Posterior cingulate gyrus (tissue), 11 donors: ENCODE measurements at regions of chr11 and their contacts with region 1.

Region 1: DNA sequence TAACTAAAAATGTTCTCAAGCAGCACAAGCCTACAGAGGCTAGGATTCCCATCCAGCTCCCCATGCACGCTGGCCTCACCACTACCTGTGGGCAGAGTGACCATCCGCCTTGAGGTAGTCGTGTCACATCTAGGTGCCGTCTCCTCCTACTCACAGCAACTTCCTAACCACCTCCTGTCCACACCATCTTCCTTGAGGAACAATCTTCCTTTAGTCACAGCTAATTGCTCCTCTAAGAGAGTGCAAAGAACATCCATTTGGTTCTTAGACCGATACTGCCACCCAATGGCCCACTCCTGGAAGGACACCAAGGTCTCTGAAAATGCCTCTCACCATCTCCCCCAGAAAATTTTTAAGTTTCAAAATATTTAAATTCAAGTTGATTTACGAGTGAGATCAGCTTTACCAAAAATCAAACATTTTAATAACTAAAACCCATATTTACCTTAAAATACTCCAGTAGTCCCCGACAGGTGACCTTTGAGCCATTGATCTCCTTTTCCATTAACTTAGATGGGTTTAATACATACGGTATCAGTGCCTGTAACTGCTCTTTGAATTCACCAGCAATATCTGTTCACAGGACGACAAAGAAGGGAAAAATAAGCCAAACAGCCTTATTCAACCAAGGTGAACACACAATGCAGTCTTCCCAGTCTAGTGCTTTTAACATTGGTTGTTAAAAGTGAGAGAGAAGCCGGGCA is 21.7 kb upstream of the PLAAT3 start:
- DNase-seq: peak; percentile 40 to 95 (median 76)

Region 2: GRCh38 chr11:63042596-63042995 is 593.3 kb before region 1 on chr11:
- intact Hi-C with region 1: loop called (anchors 5 kb)
- DNase-seq: no peak

Region 3: DNA sequence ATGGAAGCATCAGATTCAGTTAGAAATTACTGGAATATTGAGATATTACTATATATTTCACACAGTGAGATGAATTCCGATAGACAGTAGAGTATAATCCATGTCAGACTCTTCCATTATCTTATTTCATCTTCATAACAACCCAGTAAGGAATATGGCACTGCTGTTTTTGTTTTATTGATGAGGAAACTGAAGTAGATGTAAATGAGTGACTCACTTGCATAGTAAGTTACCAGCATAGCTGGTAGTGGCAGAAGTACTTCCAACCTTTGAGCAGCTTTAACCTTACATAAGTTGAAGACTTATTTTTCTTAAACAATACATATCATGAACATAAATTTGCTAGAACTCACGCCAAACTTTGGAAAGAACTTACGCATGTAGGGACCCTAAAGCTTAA is 337.7 kb before region 1 on chr11:
- intact Hi-C with region 1: no loop called
- DNase-seq: no peak

Region 4: GRCh38 chr11:63478896-63479295 is 157.0 kb before region 1 on chr11:
- intact Hi-C with region 1: loop called (anchors 1 kb)
- DNase-seq: peak in 6 of 10 donors; percentile 8 to 84 (median 59)

Region 5: DNA sequence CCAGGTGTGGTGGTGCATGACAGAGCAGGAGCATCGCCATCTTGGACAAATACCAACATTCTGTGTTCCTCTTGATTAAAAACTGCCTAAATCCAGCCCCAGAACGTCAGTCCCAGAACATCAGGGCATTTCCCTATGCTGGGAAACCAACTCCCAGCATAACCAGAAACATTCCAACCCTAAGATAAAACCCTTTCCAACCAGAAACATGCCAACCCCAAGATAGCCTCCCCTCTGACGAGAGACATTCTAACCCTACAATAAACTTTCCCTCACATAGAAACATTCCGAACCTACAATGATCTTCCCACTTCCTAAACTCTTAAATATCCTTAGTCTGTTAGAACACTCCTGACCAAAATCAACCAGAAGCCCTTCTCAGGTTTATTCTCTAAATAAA is 87.7 kb before region 1 on chr11:
- intact Hi-C with region 1: no loop called
- DNase-seq: no peak

Region 6: DNA sequence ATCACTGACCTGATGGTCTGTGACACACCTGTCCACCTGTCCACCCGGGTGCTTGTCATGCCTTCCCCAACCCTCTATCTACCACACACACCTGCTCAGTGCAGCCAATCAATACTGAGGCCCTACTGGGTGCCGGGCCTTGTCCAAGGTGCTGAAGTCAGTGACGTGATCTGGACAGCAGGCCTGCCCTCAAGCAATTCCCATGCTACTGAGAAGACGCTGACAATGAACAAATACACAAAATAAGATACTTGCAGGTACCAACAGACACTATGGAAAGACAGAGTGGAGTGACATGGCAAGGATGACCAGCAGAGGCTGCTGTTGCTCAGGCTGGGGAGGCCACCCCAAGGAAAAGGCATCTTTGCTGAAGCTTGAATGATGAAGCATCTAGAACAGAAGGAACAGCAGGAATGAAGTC is 42.9 kb before region 1 on chr11:
- intact Hi-C with region 1: loop called (anchors 1 kb)
- DNase-seq: peak in 7 of 10 donors; percentile 36 to 92 (median 56)

Region 7: DNA sequence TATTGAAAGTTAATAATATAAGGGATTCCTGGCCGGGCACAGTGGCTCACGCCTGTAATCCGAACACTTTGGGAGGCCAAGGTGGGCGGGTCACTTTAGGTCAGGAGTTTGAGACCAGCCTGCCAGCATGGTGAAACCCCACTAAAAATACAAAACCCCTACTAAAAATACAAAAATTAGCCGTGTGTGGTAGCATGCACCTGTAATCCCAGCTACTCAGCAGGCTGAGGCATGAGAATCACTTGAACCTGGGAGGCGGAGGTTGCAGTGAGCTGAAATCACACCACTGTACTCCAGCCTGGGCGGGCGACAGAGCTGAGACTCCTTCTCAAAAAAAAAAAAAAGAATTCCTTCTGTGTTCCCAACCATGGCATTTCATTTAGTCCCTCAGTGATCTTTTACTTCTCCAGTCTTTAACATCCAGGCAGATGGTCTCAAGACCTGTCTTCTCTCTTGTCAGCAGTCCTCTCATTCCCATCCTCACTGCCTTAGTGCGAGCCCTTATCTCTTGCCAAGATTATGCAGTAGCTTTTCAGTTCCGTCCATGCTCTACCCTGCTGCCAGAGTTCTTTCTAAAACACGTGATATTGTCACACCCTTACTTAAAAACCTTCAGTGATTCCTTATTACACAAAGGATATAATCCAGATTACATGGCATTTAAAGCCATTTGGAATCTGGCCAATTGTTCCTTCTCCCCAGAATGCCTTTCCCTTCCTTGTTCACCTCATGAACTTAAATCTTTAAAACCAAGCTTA is 63.2 kb after region 1 on chr11:
- intact Hi-C with region 1: no loop called
- DNase-seq: no peak

Region 8: GRCh38 chr11:63738720-63739360 is 102.9 kb after region 1 on chr11:
- intact Hi-C with region 1: loop called (anchors 2 kb)
- DNase-seq: peak in 8 of 10 donors; percentile 23 to 88 (median 78)

Region 9: DNA sequence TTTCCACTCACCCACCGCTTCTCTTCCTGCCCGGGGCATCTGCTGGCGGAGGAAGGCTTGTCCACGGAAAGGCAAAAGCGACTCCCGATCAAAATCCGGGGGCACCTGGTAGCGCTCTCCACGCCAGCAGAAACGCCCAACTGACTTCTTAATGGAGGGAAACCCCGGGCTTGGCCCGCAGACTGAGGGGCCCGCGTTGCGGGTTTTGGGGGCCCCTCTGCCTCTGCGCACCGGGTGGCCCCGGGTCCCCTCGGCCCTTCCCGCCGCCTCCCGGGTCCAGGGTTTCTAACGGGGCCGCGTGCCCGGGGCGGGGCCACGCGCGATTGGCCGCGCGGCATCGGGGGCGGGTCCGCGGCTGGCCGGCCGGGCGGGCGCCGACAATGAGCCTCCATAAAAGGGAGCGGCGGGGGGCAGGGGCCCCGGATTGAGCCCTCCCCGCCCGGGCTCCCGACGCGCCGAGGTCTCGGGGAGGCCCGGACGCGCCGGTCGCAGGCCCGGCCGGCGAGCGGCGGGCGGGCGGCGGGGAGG is 177.2 kb after region 1 on chr11 and contains the start of gene SPINDOC:
- intact Hi-C with region 1: no loop called
- DNase-seq: peak; percentile 69 to 98 (median 82)